B cell (primary cell): ENCODE measurements at regions of chr12 and their contacts with region 1.

Region 1: DNA sequence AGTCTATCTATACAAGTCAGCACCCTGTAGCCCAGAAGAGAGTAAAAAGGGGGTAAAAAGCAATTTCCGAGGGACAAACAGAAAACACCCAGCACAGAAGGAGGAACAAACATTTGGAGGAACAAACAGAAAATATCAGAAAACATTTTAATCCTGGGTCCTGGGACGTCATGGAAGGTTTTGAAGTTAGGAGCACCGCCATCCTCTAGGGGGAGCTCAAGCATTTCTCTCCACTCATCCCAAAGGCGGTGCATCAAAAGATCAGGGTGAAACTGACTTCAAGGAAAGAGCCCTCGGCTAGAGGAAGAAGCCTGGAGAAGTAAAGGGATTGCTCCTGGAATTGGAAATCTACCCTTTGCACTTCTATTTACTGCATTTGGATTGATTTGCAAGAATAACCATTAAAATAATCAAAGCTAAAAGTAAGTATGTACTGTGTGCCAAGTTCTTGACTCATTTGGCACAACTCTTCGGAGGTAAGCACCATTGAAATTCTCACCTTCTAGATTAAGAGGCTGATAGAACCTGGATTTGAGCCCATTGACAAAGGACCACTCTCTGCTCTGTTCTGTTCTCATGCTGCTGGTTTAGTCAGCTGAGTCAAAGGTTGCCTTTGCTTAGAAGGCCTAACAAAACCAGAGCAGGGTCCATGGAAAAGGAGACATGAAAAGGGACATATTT is 17.2 kb upstream of the POC1B start:
- DNase-seq: peak; percentile 79
- ATAC-seq: peak; percentile 92
- H3K4me3 ChIP-seq: no peak overlapping the region
- H3K4me3 Mint-ChIP-seq: no peak overlapping the region
- H3K27ac ChIP-seq: no peak overlapping the region
- H3K27ac Mint-ChIP-seq: no peak overlapping the region
- H3K4me1 ChIP-seq: peaks cover 0 to 11% of the 10 kb centered on the region in 2 donors
- H3K4me1 Mint-ChIP-seq: peaks cover 15% of the 10 kb centered on the region
- H3K27me3 ChIP-seq: no peaks in the 10 kb centered on the region
- H3K27me3 Mint-ChIP-seq: no peaks in the 10 kb centered on the region
- CTCF ChIP-seq: peak; percentile 95

Region 2: GRCh38 chr12:89529738-89530137 is 13.3 kb before region 1 on chr12:
- CTCF ChIA-PET with region 1: interaction called, 12 read pairs
- POLR2A ChIA-PET with region 1: no interaction called
- intact Hi-C with region 1: no loop called
- DNase-seq: peak; percentile 67
- ATAC-seq: no peak
- H3K4me3 ChIP-seq: no peak overlapping the region
- H3K4me3 Mint-ChIP-seq: no peak overlapping the region
- H3K27ac ChIP-seq: no peak overlapping the region
- H3K27ac Mint-ChIP-seq: no peak overlapping the region
- H3K4me1 ChIP-seq: peaks cover 6 to 12% of the 10 kb centered on the region in 2 donors
- H3K4me1 Mint-ChIP-seq: peaks cover 27% of the 10 kb centered on the region
- H3K27me3 ChIP-seq: no peaks in the 10 kb centered on the region
- H3K27me3 Mint-ChIP-seq: no peaks in the 10 kb centered on the region
- CTCF ChIP-seq: peak; percentile 81

Region 3: DNA sequence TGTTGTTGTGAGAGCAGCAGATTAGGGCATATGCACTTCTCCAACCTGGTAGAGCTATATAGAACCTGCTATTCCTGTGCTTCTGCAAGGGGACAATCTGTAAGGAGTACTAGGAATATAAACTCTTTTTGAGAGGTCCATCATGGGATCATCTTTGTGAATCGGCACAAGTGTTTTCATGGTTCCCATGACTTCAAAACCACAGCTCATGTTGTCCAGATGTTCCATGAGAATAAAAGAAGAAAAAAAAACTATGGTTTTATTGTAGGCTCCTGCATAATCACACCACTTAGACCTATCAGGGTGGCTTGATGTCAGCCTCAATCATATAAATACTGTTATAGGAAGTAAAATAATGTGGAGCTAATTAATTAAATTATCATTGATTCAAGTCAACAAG is 477.0 kb after region 1 on chr12:
- CTCF ChIA-PET with region 1: interaction called, 72 read pairs
- POLR2A ChIA-PET with region 1: no interaction called
- intact Hi-C with region 1: no loop called
- DNase-seq: no peak
- ATAC-seq: no peak
- H3K4me3 ChIP-seq: no peak overlapping the region
- H3K4me3 Mint-ChIP-seq: no peak overlapping the region
- H3K27ac ChIP-seq: no peak overlapping the region
- H3K27ac Mint-ChIP-seq: no peak overlapping the region
- H3K4me1 ChIP-seq: no peaks in the 10 kb centered on the region
- H3K4me1 Mint-ChIP-seq: no peaks in the 10 kb centered on the region
- H3K27me3 ChIP-seq: no peaks in the 10 kb centered on the region
- H3K27me3 Mint-ChIP-seq: no peaks in the 10 kb centered on the region
- CTCF ChIP-seq: no peak

Region 4: GRCh38 chr12:90163975-90164374 is 620.9 kb after region 1 on chr12:
- CTCF ChIA-PET with region 1: interaction called, 13 read pairs
- POLR2A ChIA-PET with region 1: no interaction called
- intact Hi-C with region 1: no loop called
- DNase-seq: no peak
- ATAC-seq: no peak
- H3K4me3 ChIP-seq: no peak overlapping the region
- H3K4me3 Mint-ChIP-seq: no peak overlapping the region
- H3K27ac ChIP-seq: no peak overlapping the region
- H3K27ac Mint-ChIP-seq: no peak overlapping the region
- H3K4me1 ChIP-seq: no peaks in the 10 kb centered on the region
- H3K4me1 Mint-ChIP-seq: no peaks in the 10 kb centered on the region
- H3K27me3 ChIP-seq: no peaks in the 10 kb centered on the region
- H3K27me3 Mint-ChIP-seq: no peaks in the 10 kb centered on the region
- CTCF ChIP-seq: no peak

Region 5: DNA sequence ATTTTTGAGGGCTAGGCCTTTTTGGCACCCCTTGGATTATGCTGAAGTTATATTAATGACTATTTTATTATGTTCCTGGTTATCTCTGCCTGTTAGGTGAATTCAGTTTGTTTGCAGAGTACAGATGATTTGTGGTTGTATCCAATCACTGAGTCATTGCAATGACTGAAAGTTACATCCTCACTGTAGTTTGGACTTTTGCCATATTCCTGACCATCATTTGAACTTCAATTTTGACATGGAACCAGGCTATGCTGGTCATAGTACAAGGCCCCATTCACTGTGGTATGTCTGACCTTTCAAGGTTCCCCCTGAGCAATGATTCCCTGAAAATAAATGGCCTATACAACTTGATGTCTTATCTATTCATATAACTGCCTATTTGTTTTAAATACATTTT is 790.9 kb after region 1 on chr12:
- CTCF ChIA-PET with region 1: no interaction called
- POLR2A ChIA-PET with region 1: no interaction called
- intact Hi-C with region 1: loop called (anchors 10 kb)
- DNase-seq: no peak
- ATAC-seq: no peak
- H3K4me3 ChIP-seq: no peak overlapping the region
- H3K4me3 Mint-ChIP-seq: no peak overlapping the region
- H3K27ac ChIP-seq: no peak overlapping the region
- H3K27ac Mint-ChIP-seq: no peak overlapping the region
- H3K4me1 ChIP-seq: no peaks in the 10 kb centered on the region
- H3K4me1 Mint-ChIP-seq: no peaks in the 10 kb centered on the region
- H3K27me3 ChIP-seq: no peaks in the 10 kb centered on the region
- H3K27me3 Mint-ChIP-seq: no peaks in the 10 kb centered on the region
- CTCF ChIP-seq: no peak

Region 6: DNA sequence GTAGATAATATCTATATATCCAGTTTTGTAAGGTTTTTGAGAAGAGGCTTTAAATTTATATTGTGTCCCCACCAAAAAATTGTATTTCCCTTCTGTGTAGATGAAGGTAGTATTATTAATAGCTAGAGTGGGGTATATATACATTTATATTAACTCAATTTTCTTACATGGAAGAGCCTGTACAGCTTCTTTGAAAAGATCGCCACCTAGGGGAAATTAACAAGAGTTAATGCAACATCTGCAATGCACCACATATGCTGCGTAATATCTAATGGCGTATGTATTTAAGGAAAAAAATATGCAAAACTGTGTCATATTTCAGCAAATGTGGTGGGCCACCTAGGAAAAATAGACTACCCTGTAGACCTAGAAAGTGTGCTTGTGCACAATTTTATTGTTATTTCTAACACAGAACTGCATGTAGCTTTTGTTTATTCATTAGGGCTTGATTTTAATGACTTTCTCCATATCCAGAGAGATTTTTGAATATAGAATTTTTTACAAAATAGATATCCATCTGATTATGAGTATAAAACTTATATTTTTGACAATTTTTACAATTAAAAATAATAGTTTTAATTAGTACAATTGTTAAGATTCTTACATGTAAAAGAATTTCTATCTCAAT is 1397.9 kb after region 1 on chr12:
- CTCF ChIA-PET with region 1: interaction called, 12 read pairs
- POLR2A ChIA-PET with region 1: no interaction called
- intact Hi-C with region 1: loop called (anchors 2 kb)
- DNase-seq: peak; percentile 23
- ATAC-seq: no peak
- H3K4me3 ChIP-seq: no peak overlapping the region
- H3K4me3 Mint-ChIP-seq: no peak overlapping the region
- H3K27ac ChIP-seq: no peak overlapping the region
- H3K27ac Mint-ChIP-seq: no peak overlapping the region
- H3K4me1 ChIP-seq: no peaks in the 10 kb centered on the region
- H3K4me1 Mint-ChIP-seq: no peaks in the 10 kb centered on the region
- H3K27me3 ChIP-seq: peaks cover 0 to 6% (median 0%) of the 10 kb centered on the region in 4 experiments
- H3K27me3 Mint-ChIP-seq: peaks cover 22% of the 10 kb centered on the region
- CTCF ChIP-seq: peak; percentile 66